ENCODE measurements at regions of chr12 and their contacts with region 1.

Region 1: DNA sequence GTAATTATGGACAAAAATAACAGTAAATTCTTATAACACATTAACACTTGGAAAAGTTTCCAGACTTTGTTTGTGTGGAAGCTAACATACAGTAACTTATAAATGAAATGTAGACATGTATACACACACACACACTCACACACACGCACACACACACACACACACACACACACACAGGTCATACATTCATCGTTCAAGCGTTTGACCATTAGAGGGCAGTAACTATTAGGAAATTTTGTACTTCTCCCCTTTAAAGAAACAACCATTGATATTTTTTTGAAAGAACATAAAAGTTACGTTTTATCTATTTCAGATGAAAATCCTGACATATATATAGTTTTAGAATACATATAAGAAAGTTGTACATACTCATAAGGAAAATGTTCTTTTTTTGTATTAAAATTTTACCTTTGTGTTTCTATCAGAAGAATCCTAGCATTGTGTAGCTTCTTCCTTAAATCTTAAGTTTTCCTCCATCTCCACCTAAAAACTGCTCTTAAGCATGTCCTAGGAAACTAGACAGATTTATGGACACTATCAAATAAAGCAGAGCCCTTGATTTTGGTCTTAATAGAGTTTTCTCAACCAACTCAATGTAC is 29.0 kb downstream of the PTPRQ start:
- DNase-seq: no peak
- H3K4me3 ChIP-seq: no peak overlapping the region
- H3K27ac ChIP-seq: no peak overlapping the region
- H3K4me1 ChIP-seq: no peaks in the 10 kb centered on the region
- H3K27me3 ChIP-seq: no peaks in the 10 kb centered on the region
- CTCF ChIP-seq: peak; percentile 31 to 49 (median 46)

Region 2: DNA sequence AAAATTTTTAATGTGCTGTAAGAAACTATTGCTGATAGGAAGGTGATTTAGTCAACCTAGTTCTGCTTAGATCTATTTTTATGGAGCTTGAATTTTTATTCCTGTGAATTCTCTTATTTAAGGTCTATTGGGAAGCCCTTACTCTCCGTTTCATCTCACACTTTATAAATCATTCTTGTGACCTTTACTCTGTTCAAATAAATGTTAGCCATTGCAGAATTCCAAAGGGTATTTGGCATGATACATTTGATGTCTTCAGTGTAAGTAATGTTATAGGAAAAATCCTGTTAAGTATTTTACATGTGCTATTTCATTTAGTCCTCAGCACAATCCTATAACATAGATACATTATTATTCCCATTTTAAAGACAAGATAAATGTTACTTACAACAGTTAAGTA is 16.5 kb before region 1 on chr12:
- intact Hi-C with region 1: loop called (anchors 1 kb)
- DNase-seq: no peak
- H3K4me3 ChIP-seq: no peak overlapping the region
- H3K27ac ChIP-seq: no peak overlapping the region
- H3K4me1 ChIP-seq: no peaks in the 10 kb centered on the region
- H3K27me3 ChIP-seq: no peaks in the 10 kb centered on the region
- CTCF ChIP-seq: no peak

Region 3: GRCh38 chr12:80485222-80485987 is 12.4 kb after region 1 on chr12:
- intact Hi-C with region 1: no loop called
- DNase-seq: no peak
- H3K4me3 ChIP-seq: no peak overlapping the region
- H3K27ac ChIP-seq: no peak overlapping the region
- H3K4me1 ChIP-seq: no peaks in the 10 kb centered on the region
- H3K27me3 ChIP-seq: no peaks in the 10 kb centered on the region
- CTCF ChIP-seq: no peak

Region 4: GRCh38 chr12:80598004-80598606 is 125.1 kb after region 1 on chr12:
- intact Hi-C with region 1: loop called (anchors 5 kb)
- DNase-seq: no peak
- H3K4me3 ChIP-seq: no peak overlapping the region
- H3K27ac ChIP-seq: no peak overlapping the region
- H3K4me1 ChIP-seq: no peaks in the 10 kb centered on the region
- H3K27me3 ChIP-seq: no peaks in the 10 kb centered on the region
- CTCF ChIP-seq: peak in 1 of 3 experiments; percentile 15

Region 5: DNA sequence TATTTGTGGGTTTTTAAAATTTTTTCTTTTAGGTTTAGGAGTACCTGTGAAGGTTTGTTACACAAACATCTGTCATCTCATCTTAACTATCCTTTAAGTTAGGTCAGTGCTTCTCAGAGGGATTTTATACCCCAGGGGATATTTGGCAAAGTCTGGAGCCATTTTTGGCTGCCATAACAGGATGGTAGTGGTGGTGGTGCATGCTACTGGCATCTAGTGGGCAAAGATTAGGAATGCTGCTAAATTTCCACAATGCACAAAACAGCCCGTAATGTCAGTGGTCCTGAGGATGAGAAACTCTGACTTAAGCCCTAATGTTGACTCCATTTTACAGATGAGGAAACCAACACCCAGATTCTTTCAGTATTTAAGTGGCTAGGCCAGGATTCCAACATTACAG is 149.3 kb after region 1 on chr12:
- intact Hi-C with region 1: no loop called
- DNase-seq: no peak
- H3K4me3 ChIP-seq: no peak overlapping the region
- H3K27ac ChIP-seq: no peak overlapping the region
- H3K4me1 ChIP-seq: peaks cover 0 to 3% of the 10 kb centered on the region in 2 donors
- H3K27me3 ChIP-seq: no peaks in the 10 kb centered on the region
- CTCF ChIP-seq: no peak

Region 6: DNA sequence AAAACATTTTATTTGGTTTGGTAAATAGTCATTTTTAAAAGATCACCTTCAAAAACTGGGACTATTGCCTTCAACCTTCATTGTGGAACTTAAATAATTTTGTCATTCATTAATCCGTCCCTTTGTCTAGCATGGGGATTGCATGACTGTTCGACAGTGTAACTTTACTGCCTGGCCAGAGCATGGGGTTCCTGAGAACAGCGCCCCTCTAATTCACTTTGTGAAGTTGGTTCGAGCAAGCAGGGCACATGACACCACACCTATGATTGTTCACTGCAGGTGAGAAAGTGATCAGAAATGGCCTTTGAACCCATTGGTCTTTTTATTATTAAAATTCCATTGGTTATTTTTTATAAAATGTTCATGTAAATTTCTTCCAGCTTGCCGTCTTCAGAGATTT is 197.2 kb after region 1 on chr12:
- intact Hi-C with region 1: no loop called
- DNase-seq: no peak
- H3K4me3 ChIP-seq: no peak overlapping the region
- H3K27ac ChIP-seq: no peak overlapping the region
- H3K4me1 ChIP-seq: no peaks in the 10 kb centered on the region
- H3K27me3 ChIP-seq: no peaks in the 10 kb centered on the region
- CTCF ChIP-seq: no peak

Region 7: GRCh38 chr12:80763874-80764273 is 290.9 kb after region 1 on chr12:
- intact Hi-C with region 1: loop called (anchors 2 kb)
- DNase-seq: no peak
- H3K4me3 ChIP-seq: no peak overlapping the region
- H3K27ac ChIP-seq: no peak overlapping the region
- H3K4me1 ChIP-seq: no peaks in the 10 kb centered on the region
- H3K27me3 ChIP-seq: no peaks in the 10 kb centered on the region
- CTCF ChIP-seq: peak in 2 of 3 experiments; percentile 52 to 59

Measured in ascending aorta (tissue), 2 donors.